ENCODE measurements at regions of chr11 and their contacts with region 1.

Region 1: GRCh38 chr11:118572061-118572980 is at the start of gene ARCN1:
- DNase-seq: peak; percentile 40 to 89
- H3K4me3 ChIP-seq: peak within 1 kb of the TSS; percentile 84 to 98
- H3K27ac ChIP-seq: peak within 1 kb of the TSS; percentile 100
- H3K4me1 ChIP-seq: peaks cover 6 to 28% of the 10 kb centered on the region in 2 donors
- H3K27me3 ChIP-seq: no peaks in the 10 kb centered on the region
- CTCF ChIP-seq: no peak
- total RNA-seq, gene ARCN1: 93.8 TPM

Region 2: DNA sequence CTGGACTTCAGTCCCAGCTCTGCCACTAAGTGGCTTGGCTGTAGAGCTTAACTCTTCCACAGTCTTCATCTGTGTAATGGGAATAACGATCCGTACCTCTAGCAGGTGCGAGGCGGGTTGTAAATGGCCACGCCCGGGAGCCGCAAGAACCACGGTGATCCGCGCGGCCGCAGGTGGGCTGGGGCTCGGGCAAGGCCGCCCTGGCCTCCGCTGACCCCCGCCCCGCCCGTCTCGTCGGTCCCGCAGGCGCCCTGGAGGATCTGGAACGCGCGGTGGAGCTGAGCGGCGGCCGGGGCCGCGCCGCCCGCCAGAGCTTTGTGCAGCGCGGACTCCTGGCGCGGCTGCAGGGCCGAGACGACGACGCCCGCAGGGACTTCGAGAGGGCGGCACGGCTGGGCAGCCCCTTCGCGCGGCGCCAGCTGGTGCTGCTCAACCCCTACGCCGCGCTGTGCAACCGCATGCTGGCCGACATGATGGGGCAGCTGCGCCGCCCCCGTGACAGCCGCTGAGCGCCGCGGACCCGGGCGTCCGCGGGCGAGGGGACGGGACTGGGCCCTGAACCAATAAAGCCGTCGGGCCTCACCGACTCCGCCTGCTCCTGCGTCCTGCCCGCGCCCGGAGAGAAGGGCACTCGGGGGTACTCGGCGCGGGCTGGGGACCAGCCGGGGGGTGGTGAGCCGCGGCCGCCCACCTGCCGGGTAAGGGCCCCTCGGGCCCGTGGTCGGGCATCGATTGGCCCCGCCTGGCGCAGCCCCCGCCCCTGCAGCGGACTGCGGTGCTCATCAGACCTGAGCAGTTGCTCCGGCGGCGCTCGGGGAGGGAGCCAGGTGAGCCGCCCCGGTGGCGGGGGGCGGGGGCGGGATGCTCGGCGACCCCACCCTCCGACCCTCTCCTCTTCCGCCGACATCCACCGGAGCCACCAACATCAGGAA is 41.6 kb before region 1 on chr11 and contains the start of gene TMEM25:
- intact Hi-C with region 1: loop called (anchors 2 kb)
- DNase-seq: peak in 1 of 2 donors; percentile 81
- H3K4me3 ChIP-seq: peak within 1 kb of the TSS; percentile 84 to 92
- H3K27ac ChIP-seq: peak within 1 kb of the TSS; percentile 71 to 73
- H3K4me1 ChIP-seq: peaks cover 0 to 21% of the 10 kb centered on the region in 2 donors
- H3K27me3 ChIP-seq: no peaks in the 10 kb centered on the region
- CTCF ChIP-seq: no peak
- total RNA-seq, gene TMEM25: 133 TPM

Region 3: DNA sequence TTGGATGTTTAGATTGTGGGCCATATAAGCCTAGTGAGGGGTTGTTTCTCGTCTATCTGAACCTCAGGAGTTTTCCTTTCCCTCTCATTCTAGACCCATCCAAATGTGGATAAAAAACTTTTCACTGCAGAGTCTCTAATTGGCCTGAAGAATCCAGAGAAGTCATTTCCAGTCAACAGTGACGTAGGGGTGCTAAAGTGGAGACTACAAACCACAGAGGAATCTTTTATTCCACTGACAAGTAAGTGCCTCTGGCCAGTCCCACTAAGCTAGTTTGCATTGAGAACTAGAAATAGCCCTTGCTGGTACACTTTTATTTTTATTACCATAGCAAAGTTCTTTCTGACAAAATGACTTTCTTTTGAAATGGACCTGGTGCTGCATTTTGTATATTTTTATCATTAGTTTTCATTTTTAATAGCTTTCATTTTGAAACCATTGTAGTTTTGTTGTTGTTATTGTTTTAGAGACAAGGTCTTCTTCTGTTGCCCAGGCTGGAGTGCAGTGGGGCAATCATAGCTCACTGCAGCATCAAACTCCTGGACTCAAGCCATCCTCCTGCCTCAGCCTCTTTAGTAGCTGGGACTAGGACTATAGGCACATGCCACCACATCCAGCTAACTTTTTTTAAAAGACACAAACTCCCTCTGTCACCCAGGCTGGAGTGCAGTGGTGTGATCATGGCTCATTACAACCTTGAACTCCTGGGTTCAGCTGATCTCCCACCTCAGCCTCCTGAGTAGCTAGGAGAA is 20.5 kb after region 1 on chr11:
- intact Hi-C with region 1: loop called (anchors 2 kb)
- DNase-seq: peak in 1 of 2 donors; percentile 76
- H3K4me3 ChIP-seq: no peak overlapping the region
- H3K27ac ChIP-seq: peak overlapping the region; percentile 88 to 90
- H3K4me1 ChIP-seq: peaks cover 6 to 27% of the 10 kb centered on the region in 2 donors
- H3K27me3 ChIP-seq: no peaks in the 10 kb centered on the region
- CTCF ChIP-seq: no peak

Region 4: GRCh38 chr11:118768690-118769089 is 196.4 kb after region 1 on chr11:
- intact Hi-C with region 1: no loop called
- DNase-seq: no peak
- H3K4me3 ChIP-seq: peak overlapping the region in 1 of 2 donors; percentile 19
- H3K27ac ChIP-seq: peak overlapping the region in 1 of 2 donors; percentile 10
- H3K4me1 ChIP-seq: peaks cover 7 to 56% of the 10 kb centered on the region in 2 donors
- H3K27me3 ChIP-seq: no peaks in the 10 kb centered on the region
- CTCF ChIP-seq: no peak

Measured in ascending aorta (tissue), 2 donors.